ENCODE measurements at regions of chr12 and their contacts with region 1.

Region 1: GRCh38 chr12:72444125-72444524 is 172.0 kb downstream of the TRHDE start:
- DNase-seq: no peak
- ATAC-seq: no peak
- H3K4me3 ChIP-seq: no peak overlapping the region
- H3K27ac ChIP-seq: no peak overlapping the region
- H3K4me1 ChIP-seq: no peaks in the 10 kb centered on the region
- H3K27me3 ChIP-seq: no peaks in the 10 kb centered on the region
- CTCF ChIP-seq: no peak

Region 2: GRCh38 chr12:73181244-73181643 is 737.1 kb after region 1 on chr12:
- CTCF ChIA-PET with region 1: no interaction called
- POLR2A ChIA-PET with region 1: interaction called, 10 read pairs
- in situ Hi-C with region 1: no loop called
- intact Hi-C with region 1: no loop called
- DNase-seq: no peak
- ATAC-seq: no peak
- H3K4me3 ChIP-seq: no peak overlapping the region
- H3K27ac ChIP-seq: no peak overlapping the region
- H3K4me1 ChIP-seq: no peaks in the 10 kb centered on the region
- H3K27me3 ChIP-seq: no peaks in the 10 kb centered on the region
- CTCF ChIP-seq: no peak

Measured in Panc1 (cell line).